ENCODE measurements at regions of chr10 and their contacts with region 1.

Region 1: DNA sequence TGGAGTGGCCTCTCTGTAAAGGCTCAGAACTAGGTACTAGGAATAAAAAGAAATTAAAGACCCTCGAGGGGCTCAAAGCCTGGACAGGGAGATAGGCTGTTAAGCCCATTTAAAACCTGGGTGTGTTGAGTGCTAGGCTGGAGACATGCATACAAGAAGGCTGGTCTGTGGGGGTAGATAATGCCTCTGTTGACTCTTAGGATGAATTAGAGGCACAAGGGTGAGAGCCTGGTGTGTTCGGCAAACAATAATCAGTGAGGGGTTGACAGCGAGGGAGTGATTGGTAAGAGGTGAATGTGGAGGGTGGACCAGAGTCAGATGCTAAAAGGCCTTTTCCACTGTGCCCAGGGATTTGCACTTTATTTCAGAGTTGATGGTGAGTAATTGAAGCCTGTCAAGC is 12.7 kb downstream of the GSTO2 start:
- DNase-seq: no peak
- H3K4me3 ChIP-seq: no peak overlapping the region
- H3K27ac ChIP-seq: no peak overlapping the region
- H3K4me1 ChIP-seq: no peaks in the 10 kb centered on the region
- H3K27me3 ChIP-seq: no peaks in the 10 kb centered on the region
- CTCF ChIP-seq: no peak
- EP300 ChIP-seq: no peak
- POLR2A ChIP-seq: no peak
- RAD21 ChIP-seq: no peak

Region 2: DNA sequence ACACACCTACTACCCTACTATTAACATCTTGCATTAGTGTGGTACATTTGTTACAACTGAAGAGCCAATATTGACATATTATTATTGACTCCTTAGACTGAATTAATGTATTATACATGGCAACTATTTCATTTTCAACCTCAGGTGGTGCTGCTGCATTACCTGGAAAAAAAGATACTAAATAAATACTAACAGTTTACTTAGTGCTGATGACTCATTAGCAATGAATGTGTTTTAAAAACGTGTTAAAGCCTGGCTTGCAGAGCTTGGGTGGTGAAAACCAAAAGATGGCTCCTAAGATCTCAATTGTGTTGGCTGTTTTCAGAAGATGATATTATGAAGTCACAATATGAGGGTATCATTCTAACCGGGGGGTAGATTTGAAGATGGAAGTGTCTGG is 84.3 kb before region 1 on chr10:
- CTCF ChIA-PET with region 1: no interaction called
- POLR2A ChIA-PET with region 1: no interaction called
- DNase-seq: no peak
- H3K4me3 ChIP-seq: no peak overlapping the region
- H3K27ac ChIP-seq: no peak overlapping the region
- H3K4me1 ChIP-seq: no peaks in the 10 kb centered on the region
- H3K27me3 ChIP-seq: no peaks in the 10 kb centered on the region
- CTCF ChIP-seq: no peak
- EP300 ChIP-seq: no peak
- POLR2A ChIP-seq: no peak
- RAD21 ChIP-seq: no peak

Region 3: GRCh38 chr10:104297697-104298660 is 16.3 kb after region 1 on chr10:
- CTCF ChIA-PET with region 1: interaction called, 51 read pairs
- POLR2A ChIA-PET with region 1: interaction called, 4 read pairs
- DNase-seq: peak; percentile 50 to 93
- H3K4me3 ChIP-seq: no peak overlapping the region
- H3K27ac ChIP-seq: no peak overlapping the region
- H3K4me1 ChIP-seq: no peaks in the 10 kb centered on the region
- H3K27me3 ChIP-seq: no peaks in the 10 kb centered on the region
- CTCF ChIP-seq: peak; percentile 88 to 96 (median 94)
- EP300 ChIP-seq: no peak
- POLR2A ChIP-seq: no peak
- RAD21 ChIP-seq: peak; percentile 43 to 64

Region 4: GRCh38 chr10:104353325-104354048 is 71.8 kb after region 1 on chr10 and contains the start of gene CFAP58:
- CTCF ChIA-PET with region 1: interaction called, 146 read pairs
- POLR2A ChIA-PET with region 1: no interaction called
- DNase-seq: peak; percentile 79 to 98
- H3K4me3 ChIP-seq: peak within 1 kb of the TSS; percentile 35 to 71 (median 52); a peak in 7 of 8 replicates
- H3K27ac ChIP-seq: no peak within 1 kb of the TSS
- H3K4me1 ChIP-seq: peaks cover 0 to 9% (median 1%) of the 10 kb centered on the region in 4 experiments; a peak in 2 of 7 replicates
- H3K27me3 ChIP-seq: peaks cover 5 to 13% (median 10%) of the 10 kb centered on the region in 4 experiments
- CTCF ChIP-seq: peak; percentile 67 to 80 (median 69)
- EP300 ChIP-seq: no peak
- POLR2A ChIP-seq: no peak
- RAD21 ChIP-seq: peak; percentile 12 to 27; a peak in 2 of 4 replicates
- total RNA-seq, gene CFAP58: 0.71 and 1.1 TPM in 2 replicates

Region 5: GRCh38 chr10:104485632-104486031 is 203.9 kb after region 1 on chr10:
- CTCF ChIA-PET with region 1: no interaction called
- POLR2A ChIA-PET with region 1: no interaction called
- DNase-seq: no peak
- H3K4me3 ChIP-seq: no peak overlapping the region
- H3K27ac ChIP-seq: no peak overlapping the region
- H3K4me1 ChIP-seq: 0 out of 7 replicates have a peak, but pooled peaks cover 0 to 2% (median 1%) of the 10 kb centered on the region in 4 experiments
- H3K27me3 ChIP-seq: no peaks in the 10 kb centered on the region
- CTCF ChIP-seq: peak in 2 of 3 experiments; percentile 43 to 66; a peak in 3 of 4 replicates
- EP300 ChIP-seq: no peak
- POLR2A ChIP-seq: no peak
- RAD21 ChIP-seq: peak; percentile 8 to 31; a peak in 2 of 4 replicates

Measured in H1 (cell line).